CD14-positive monocyte (primary cell): ENCODE measurements at regions of chr12 and their contacts with region 1.

Region 1: GRCh38 chr12:7933255-7933729 is 2.7 kb downstream of the SLC2A3 start:
- DNase-seq: peak; percentile 76 to 93 (median 86)
- H3K4me3 ChIP-seq: peak overlapping the region; percentile 70 to 100 (median 100)
- H3K4me3 Mint-ChIP-seq: no peak overlapping the region
- H3K27ac ChIP-seq: peak overlapping the region; percentile 73 to 87
- H3K27ac Mint-ChIP-seq: no peak overlapping the region
- H3K4me1 ChIP-seq: peaks cover 43 to 54% of the 10 kb centered on the region in 2 donors
- H3K4me1 Mint-ChIP-seq: peaks cover 11% of the 10 kb centered on the region
- H3K27me3 ChIP-seq: no peaks in the 10 kb centered on the region
- H3K27me3 Mint-ChIP-seq: no peaks in the 10 kb centered on the region
- CTCF ChIP-seq: peak; percentile 78

Region 2: GRCh38 chr12:7869127-7869526 is 64.2 kb before region 1 on chr12:
- intact Hi-C with region 1: loop called in 1 of 2 experiments (anchors 10 kb)
- DNase-seq: no peak
- H3K4me3 ChIP-seq: no peak overlapping the region
- H3K4me3 Mint-ChIP-seq: no peak overlapping the region
- H3K27ac ChIP-seq: no peak overlapping the region
- H3K27ac Mint-ChIP-seq: no peak overlapping the region
- H3K4me1 ChIP-seq: peaks cover 10 to 11% of the 10 kb centered on the region in 2 donors
- H3K4me1 Mint-ChIP-seq: peaks cover 28% of the 10 kb centered on the region
- H3K27me3 ChIP-seq: peaks cover 7 to 39% of the 10 kb centered on the region in 2 donors
- H3K27me3 Mint-ChIP-seq: peaks cover 31 to 34% (median 34%) of the 10 kb centered on the region in 3 donors
- CTCF ChIP-seq: no peak

Region 3: GRCh38 chr12:7959701-7960121 is 26.4 kb after region 1 on chr12:
- intact Hi-C with region 1: loop called (anchors 2 to 5 kb)
- DNase-seq: peak in 2 of 3 donors; percentile 39 to 44
- H3K4me3 ChIP-seq: peak overlapping the region; percentile 36 to 85 (median 80)
- H3K4me3 Mint-ChIP-seq: peak overlapping the region; percentile 79 to 93
- H3K27ac ChIP-seq: peak overlapping the region; percentile 81 to 91
- H3K27ac Mint-ChIP-seq: peak overlapping the region; percentile 91 to 99 (median 96)
- H3K4me1 ChIP-seq: peaks cover 42 to 50% of the 10 kb centered on the region in 2 donors
- H3K4me1 Mint-ChIP-seq: peaks cover 48% of the 10 kb centered on the region
- H3K27me3 ChIP-seq: no peaks in the 10 kb centered on the region
- H3K27me3 Mint-ChIP-seq: peaks cover 0 to 2% (median 2%) of the 10 kb centered on the region in 3 donors
- CTCF ChIP-seq: no peak

Region 4: GRCh38 chr12:8018666-8019581 is 85.6 kb after region 1 on chr12:
- intact Hi-C with region 1: no loop called
- DNase-seq: no peak
- H3K4me3 ChIP-seq: peak overlapping the region in 2 of 3 experiments; percentile 21 to 67
- H3K4me3 Mint-ChIP-seq: peak overlapping the region; percentile 31 to 80
- H3K27ac ChIP-seq: no peak overlapping the region
- H3K27ac Mint-ChIP-seq: no peak overlapping the region
- H3K4me1 ChIP-seq: peaks cover 8 to 13% of the 10 kb centered on the region in 2 donors
- H3K4me1 Mint-ChIP-seq: peaks cover 14% of the 10 kb centered on the region
- H3K27me3 ChIP-seq: peaks cover 14 to 35% of the 10 kb centered on the region in 2 donors
- H3K27me3 Mint-ChIP-seq: peaks cover 34 to 43% (median 35%) of the 10 kb centered on the region in 3 donors
- CTCF ChIP-seq: no peak